ENCODE measurements at regions of chr7 and their contacts with region 1.

Region 1: GRCh38 chr7:151459726-151460473 is 20.0 kb upstream of the CRYGN start:
- DNase-seq: peak; percentile 61 to 90
- ATAC-seq: peak; percentile 81 to 90
- H3K4me3 ChIP-seq: peak overlapping the region; percentile 15; the same call in 1 of the 3 replicates
- H3K27ac ChIP-seq: peak overlapping the region; percentile 76 to 83
- H3K4me1 ChIP-seq: peaks cover 23% of the 10 kb centered on the region
- CTCF ChIP-seq: peak; percentile 36; the same call in 2 of the 3 replicates
- EP300 ChIP-seq: no peak
- POLR2A ChIP-seq: no peak
- RAD21 ChIP-seq: peak; percentile 48 to 63

Region 2: DNA sequence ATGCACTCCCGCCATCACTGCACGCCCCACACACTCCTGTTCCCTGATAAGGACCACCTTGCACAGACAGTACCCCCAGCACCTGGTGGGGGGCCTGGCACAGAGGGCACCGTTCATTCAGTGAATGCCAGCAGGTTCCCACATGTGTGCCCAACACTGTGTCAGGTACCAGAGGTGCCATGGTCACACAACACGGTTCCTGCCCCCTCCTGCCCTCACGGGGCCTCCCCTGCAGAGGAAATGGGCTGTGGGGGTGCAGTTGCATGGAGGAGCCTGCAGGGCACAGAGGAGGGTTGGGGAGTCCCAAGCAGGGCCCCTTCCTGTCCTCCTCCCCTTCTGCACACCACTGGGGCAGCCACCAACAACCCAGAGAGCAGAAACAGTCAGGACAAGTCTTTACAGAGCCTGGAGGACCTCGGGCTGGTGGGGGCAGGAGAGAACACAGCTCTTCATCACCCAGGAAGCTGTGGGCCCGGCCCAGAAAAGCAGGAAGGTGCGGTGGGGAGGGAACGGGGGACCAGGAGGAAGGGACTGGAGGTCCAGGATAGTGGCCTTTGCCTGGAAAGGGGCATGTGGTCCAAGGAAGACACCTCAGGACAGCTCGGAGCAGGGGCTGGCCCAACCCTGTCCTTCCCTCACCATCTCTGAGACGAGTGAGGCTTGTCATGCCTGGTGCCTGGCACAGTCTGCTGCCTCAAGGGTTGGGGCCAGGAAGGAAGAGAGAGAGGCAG is 26.9 kb before region 1 on chr7:
- CTCF ChIA-PET with region 1: no interaction called
- POLR2A ChIA-PET with region 1: no interaction called
- DNase-seq: peak in 1 of 2 experiments; percentile 49
- ATAC-seq: peak in 1 of 2 experiments; percentile 57; a peak in 3 of 6 replicates
- H3K4me3 ChIP-seq: no peak overlapping the region
- H3K27ac ChIP-seq: peak overlapping the region in 1 of 2 experiments; percentile 52; a peak in 3 of 6 replicates
- H3K4me1 ChIP-seq: peaks cover 23% of the 10 kb centered on the region
- CTCF ChIP-seq: no peak
- EP300 ChIP-seq: no peak
- POLR2A ChIP-seq: no peak
- RAD21 ChIP-seq: no peak

Region 3: DNA sequence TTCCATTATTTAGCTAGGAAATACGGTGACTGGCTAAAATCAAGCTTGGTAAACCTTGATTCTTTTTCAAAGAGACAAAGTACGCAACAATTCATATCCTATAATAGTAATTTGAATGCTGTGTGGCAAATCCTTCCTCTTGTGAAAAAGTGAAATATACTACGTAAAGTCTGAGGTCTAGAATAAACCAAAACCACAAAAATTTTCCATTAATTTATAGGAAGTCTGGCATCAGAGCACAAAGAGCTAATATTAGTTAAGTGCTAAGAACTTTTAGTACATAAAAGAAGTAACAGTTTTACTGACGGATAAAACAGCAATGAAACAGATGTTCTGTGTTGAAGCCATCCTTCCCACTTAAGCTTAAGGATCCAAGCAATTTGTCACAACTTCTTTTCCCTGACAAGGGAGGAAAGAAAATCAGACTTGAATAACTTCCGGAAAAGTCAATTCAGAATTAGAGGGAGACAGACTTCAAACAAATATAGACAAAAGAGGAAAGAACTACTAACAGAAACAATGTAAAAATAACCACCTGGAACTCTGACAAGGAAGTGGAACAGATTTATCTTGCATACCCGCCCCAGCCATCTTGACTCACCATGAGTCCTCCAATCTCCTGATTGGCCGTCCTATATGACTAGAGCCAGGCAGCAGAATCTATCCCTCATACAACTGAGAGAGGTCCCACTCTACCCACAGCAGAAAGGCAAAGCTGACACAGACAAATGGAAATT is 25.2 kb after region 1 on chr7:
- CTCF ChIA-PET with region 1: interaction called, 13 read pairs
- POLR2A ChIA-PET with region 1: interaction called, 4 read pairs
- DNase-seq: peak in 1 of 2 experiments; percentile 69
- ATAC-seq: peak; percentile 67 to 79; a peak in 5 of 6 replicates
- H3K4me3 ChIP-seq: no peak overlapping the region
- H3K27ac ChIP-seq: no peak overlapping the region
- H3K4me1 ChIP-seq: peaks cover 40% of the 10 kb centered on the region
- CTCF ChIP-seq: no peak
- EP300 ChIP-seq: no peak
- POLR2A ChIP-seq: no peak
- RAD21 ChIP-seq: no peak